T-cell (primary cell): ENCODE measurements at regions of chr7 and their contacts with region 1.

Region 1: GRCh38 chr7:5657901-5658300 is 123.6 kb downstream of the RNF216 start:
- DNase-seq: no peak
- ATAC-seq: no peak
- H3K4me3 ChIP-seq: no peak overlapping the region
- H3K4me3 Mint-ChIP-seq: no peak overlapping the region
- H3K27ac ChIP-seq: no peak overlapping the region
- H3K27ac Mint-ChIP-seq: no peak overlapping the region
- H3K4me1 ChIP-seq: peaks cover 4 to 17% of the 10 kb centered on the region in 2 experiments
- H3K4me1 Mint-ChIP-seq: peaks cover 20 to 28% (median 23%) of the 10 kb centered on the region in 3 donors
- H3K27me3 ChIP-seq: no peaks in the 10 kb centered on the region
- H3K27me3 Mint-ChIP-seq: no peaks in the 10 kb centered on the region

Region 2: GRCh38 chr7:5580714-5581395 is 77.0 kb before region 1 on chr7:
- CTCF ChIA-PET with region 1: no interaction called
- POLR2A ChIA-PET with region 1: interaction called in 1 of 2 experiments, 14 read pairs
- DNase-seq: no peak
- ATAC-seq: no peak
- H3K4me3 ChIP-seq: no peak overlapping the region
- H3K4me3 Mint-ChIP-seq: no peak overlapping the region
- H3K27ac ChIP-seq: no peak overlapping the region
- H3K27ac Mint-ChIP-seq: no peak overlapping the region
- H3K4me1 ChIP-seq: no peaks in the 10 kb centered on the region
- H3K4me1 Mint-ChIP-seq: peaks cover 0 to 11% (median 7%) of the 10 kb centered on the region in 3 donors
- H3K27me3 ChIP-seq: peaks cover 0 to 28% of the 10 kb centered on the region in 2 experiments
- H3K27me3 Mint-ChIP-seq: peaks cover 4 to 15% of the 10 kb centered on the region in 2 donors

Region 3: DNA sequence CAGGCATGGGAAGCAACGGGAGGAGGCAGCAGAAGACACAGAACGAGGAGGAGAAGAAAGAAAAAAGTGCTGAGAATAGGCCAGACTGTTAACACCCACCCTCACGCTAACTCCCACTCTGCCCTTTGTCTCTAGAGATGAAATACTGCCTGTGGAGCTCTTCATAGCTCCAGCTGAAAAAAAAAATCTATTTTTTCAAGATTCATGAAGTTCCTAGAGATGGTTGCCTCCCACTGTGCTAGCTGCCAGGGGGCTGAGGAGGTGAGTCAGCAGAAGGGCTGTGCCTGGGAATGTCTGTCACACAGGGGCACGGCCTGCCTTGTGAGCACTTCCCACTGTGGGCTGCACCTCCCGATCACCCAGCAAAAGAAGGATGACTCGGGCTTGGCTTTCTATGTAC is 21.0 kb before region 1 on chr7:
- CTCF ChIA-PET with region 1: interaction called in 1 of 2 experiments, 5 read pairs
- POLR2A ChIA-PET with region 1: interaction called, 3 to 16 read pairs
- DNase-seq: no peak
- ATAC-seq: no peak
- H3K4me3 ChIP-seq: no peak overlapping the region
- H3K4me3 Mint-ChIP-seq: no peak overlapping the region
- H3K27ac ChIP-seq: no peak overlapping the region
- H3K27ac Mint-ChIP-seq: peak overlapping the region in 1 of 2 donors; percentile 22
- H3K4me1 ChIP-seq: peaks cover 2 to 22% of the 10 kb centered on the region in 2 experiments
- H3K4me1 Mint-ChIP-seq: peaks cover 18 to 36% (median 29%) of the 10 kb centered on the region in 3 donors
- H3K27me3 ChIP-seq: no peaks in the 10 kb centered on the region
- H3K27me3 Mint-ChIP-seq: no peaks in the 10 kb centered on the region